ENCODE measurements at regions of chr21 and their contacts with region 1.

Region 1: GRCh38 chr21:41885341-41886029 is 6.3 kb upstream of the PRDM15 start:
- DNase-seq: no peak
- ATAC-seq: peak; percentile 44 to 73 (median 57)
- H3K4me3 ChIP-seq: no peak overlapping the region
- H3K27ac ChIP-seq: no peak overlapping the region
- H3K4me1 ChIP-seq: peaks cover 0 to 5% (median 0%) of the 10 kb centered on the region in 3 donors
- H3K27me3 ChIP-seq: no peaks in the 10 kb centered on the region
- CTCF ChIP-seq: no peak

Region 2: GRCh38 chr21:41715649-41716281 is 169.7 kb before region 1 on chr21:
- intact Hi-C with region 1: no loop called
- DNase-seq: peak in 4 of 6 donors; percentile 35 to 64 (median 44)
- ATAC-seq: peak; percentile 63 to 76 (median 72)
- H3K4me3 ChIP-seq: no peak overlapping the region
- H3K27ac ChIP-seq: peak overlapping the region; percentile 13 to 77 (median 48)
- H3K4me1 ChIP-seq: peaks cover 0 to 17% (median 0%) of the 10 kb centered on the region in 3 donors
- H3K27me3 ChIP-seq: no peaks in the 10 kb centered on the region
- CTCF ChIP-seq: no peak

Region 3: GRCh38 chr21:41828481-41829360 is 56.8 kb before region 1 on chr21:
- intact Hi-C with region 1: loop called in 1 of 3 experiments (anchors 10 kb)
- DNase-seq: no peak
- ATAC-seq: no peak
- H3K4me3 ChIP-seq: no peak overlapping the region
- H3K27ac ChIP-seq: no peak overlapping the region
- H3K4me1 ChIP-seq: no peaks in the 10 kb centered on the region
- H3K27me3 ChIP-seq: no peaks in the 10 kb centered on the region
- CTCF ChIP-seq: no peak

Region 4: DNA sequence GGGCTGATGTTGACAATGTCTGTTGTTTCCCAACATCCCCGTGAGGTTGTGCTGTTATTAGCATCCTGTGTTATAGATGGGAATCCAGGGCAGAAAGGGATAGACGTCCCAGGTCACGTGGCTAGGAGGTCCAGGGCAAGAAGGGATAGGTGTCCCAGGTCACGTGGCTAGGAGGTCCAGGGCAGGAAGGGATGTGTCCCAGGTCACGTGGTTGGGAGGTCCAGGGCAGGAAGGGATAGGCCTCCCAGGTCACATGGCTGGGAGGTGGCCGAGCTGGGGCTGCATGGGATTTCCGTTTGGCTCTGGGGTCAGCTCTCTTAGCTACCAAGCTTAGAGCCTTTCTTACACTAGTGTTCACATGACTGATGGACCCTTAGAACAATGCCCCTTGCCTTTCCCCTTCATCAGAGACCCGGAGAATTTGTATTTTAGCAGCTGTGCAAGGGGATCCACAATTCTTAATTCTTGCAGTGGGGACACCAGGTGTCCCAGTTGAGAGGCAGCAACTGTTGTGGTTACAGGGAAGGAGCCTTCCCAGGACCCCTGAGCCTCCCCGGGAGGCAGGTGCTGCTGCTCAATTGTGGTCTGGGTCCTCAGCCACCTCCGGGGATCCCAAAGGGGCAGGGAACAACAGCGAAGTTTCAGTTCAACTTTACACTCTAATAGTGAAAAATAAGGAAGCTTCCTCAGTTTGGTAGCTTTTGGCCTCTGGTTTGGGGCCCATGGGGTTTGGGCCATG is 254.9 kb after region 1 on chr21:
- intact Hi-C with region 1: no loop called
- DNase-seq: peak in 1 of 6 donors; percentile 19
- ATAC-seq: no peak
- H3K4me3 ChIP-seq: no peak overlapping the region
- H3K27ac ChIP-seq: no peak overlapping the region
- H3K4me1 ChIP-seq: no peaks in the 10 kb centered on the region
- H3K27me3 ChIP-seq: no peaks in the 10 kb centered on the region
- CTCF ChIP-seq: no peak

Measured in pancreas (tissue), 10 donors.